Mammary epithelial cell (primary cell): ENCODE measurements at regions of chr5 and their contacts with region 1.

Region 1: DNA sequence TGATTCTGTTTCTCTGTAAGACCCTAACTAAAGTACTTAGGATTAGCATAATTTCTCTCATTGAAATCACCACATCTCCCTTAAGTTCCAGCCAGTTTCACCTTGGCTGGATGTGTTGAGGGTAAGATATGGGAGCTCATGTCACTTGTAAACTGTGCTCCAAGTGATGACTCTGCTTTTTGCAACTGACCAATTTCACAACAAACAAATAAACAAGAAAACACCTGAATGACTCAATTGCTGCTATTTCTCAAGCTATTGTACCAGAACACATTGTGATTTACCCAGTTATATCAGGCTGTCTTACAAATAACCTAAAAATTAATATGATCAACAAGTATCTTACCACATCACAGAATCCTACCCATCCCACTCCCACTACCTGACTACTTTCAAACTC is 379.1 kb upstream of the KIF2A start:
- DNase-seq: no peak
- H3K4me3 ChIP-seq: no peak overlapping the region
- H3K27ac ChIP-seq: no peak overlapping the region
- H3K4me1 ChIP-seq: peaks cover 18% of the 10 kb centered on the region
- H3K27me3 ChIP-seq: no peaks in the 10 kb centered on the region
- CTCF ChIP-seq: no peak

Region 2: GRCh38 chr5:61673007-61673735 is 253.7 kb before region 1 on chr5:
- CTCF ChIA-PET with region 1: no interaction called
- dilution Hi-C with region 1: no loop called
- in situ Hi-C with region 1: no loop called
- intact Hi-C with region 1: loop called (anchors 2 kb)
- DNase-seq: peak; percentile 83
- H3K4me3 ChIP-seq: no peak overlapping the region
- H3K27ac ChIP-seq: no peak overlapping the region
- H3K4me1 ChIP-seq: peaks cover 18% of the 10 kb centered on the region
- H3K27me3 ChIP-seq: no peaks in the 10 kb centered on the region
- CTCF ChIP-seq: no peak

Region 3: DNA sequence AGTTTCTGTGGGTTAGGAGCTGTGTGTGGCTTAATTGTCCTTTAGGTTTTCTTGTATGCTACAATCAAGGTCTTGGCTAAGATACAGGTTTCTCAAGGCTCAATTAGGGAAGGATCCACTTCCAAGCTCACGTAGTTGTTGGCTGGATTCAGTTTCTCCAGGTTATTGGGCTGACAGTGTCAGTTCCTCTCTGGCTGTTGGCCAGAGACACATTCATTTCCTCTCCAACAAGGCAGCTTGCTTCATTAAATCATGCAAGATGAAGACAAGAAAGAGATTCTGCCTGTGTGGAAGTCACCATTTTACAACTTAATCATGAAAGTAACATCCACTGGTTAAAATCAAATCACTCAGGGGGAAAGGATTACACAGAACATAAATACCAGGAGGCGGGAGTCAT is 103.4 kb after region 1 on chr5:
- CTCF ChIA-PET with region 1: no interaction called
- dilution Hi-C with region 1: no loop called
- in situ Hi-C with region 1: no loop called
- intact Hi-C with region 1: no loop called
- DNase-seq: peak; percentile 31
- H3K4me3 ChIP-seq: no peak overlapping the region
- H3K27ac ChIP-seq: no peak overlapping the region
- H3K4me1 ChIP-seq: peaks cover 21% of the 10 kb centered on the region
- H3K27me3 ChIP-seq: no peaks in the 10 kb centered on the region
- CTCF ChIP-seq: no peak